Activated CD8-positive, alpha-beta T cell treated with anti-CD3 and anti-CD28 coated beads for 36 hours (primary cell): ENCODE measurements at regions of chr2 and their contacts with region 1.

Region 1: GRCh38 chr2:20635675-20636584 is 15.0 kb downstream of the HS1BP3 start:
- DNase-seq: peak; percentile 71
- ATAC-seq: peak; percentile 98
- H3K4me3 Mint-ChIP-seq: no peak overlapping the region
- H3K27ac Mint-ChIP-seq: no peak overlapping the region
- H3K4me1 Mint-ChIP-seq: peaks cover 2% of the 10 kb centered on the region
- H3K27me3 Mint-ChIP-seq: no peaks in the 10 kb centered on the region
- CTCF ChIP-seq: peak; percentile 70

Region 2: DNA sequence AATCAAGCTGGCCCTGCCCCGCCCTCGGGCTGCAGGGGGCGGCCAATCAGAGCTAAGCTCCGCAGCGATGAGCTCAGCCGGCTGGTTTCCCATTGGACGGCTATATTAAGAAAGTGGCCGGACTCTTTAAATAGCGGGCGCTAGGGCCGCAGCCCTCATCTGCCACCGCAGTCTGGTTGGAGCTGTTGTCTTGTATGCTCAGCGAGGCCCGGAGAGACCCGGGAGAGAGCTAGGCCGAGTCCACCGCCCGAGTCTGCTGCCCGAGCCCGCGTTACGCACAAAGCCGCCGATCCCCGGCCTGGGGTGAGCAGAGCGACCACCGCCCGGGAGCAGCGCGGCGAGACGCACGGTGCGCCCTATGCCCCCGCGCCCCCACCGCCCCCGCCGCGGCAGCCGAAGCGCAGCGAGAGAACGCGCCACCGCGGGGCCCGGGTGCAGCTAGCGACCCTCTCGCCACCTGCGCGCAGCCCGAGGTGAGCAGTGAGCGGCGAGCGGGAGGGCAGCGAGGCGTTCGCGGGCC is 189.0 kb before region 1 on chr2 and contains the start of gene RHOB:
- CTCF ChIA-PET with region 1: interaction called, 117 read pairs
- POLR2A ChIA-PET with region 1: interaction called, 6 read pairs
- intact Hi-C with region 1: no loop called
- DNase-seq: peak; percentile 95
- ATAC-seq: peak; percentile 99
- H3K4me3 Mint-ChIP-seq: peak within 1 kb of the TSS; percentile 80
- H3K27ac Mint-ChIP-seq: peak within 1 kb of the TSS; percentile 64
- H3K4me1 Mint-ChIP-seq: peaks cover 8% of the 10 kb centered on the region
- H3K27me3 Mint-ChIP-seq: peaks cover 4% of the 10 kb centered on the region
- CTCF ChIP-seq: no peak
- total RNA-seq, gene RHOB: 14.2 to 15.4 TPM

Region 3: GRCh38 chr2:20606198-20606597 is 29.7 kb before region 1 on chr2:
- CTCF ChIA-PET with region 1: no interaction called
- POLR2A ChIA-PET with region 1: no interaction called
- intact Hi-C with region 1: no loop called
- DNase-seq: no peak
- ATAC-seq: no peak
- H3K4me3 Mint-ChIP-seq: no peak overlapping the region
- H3K27ac Mint-ChIP-seq: no peak overlapping the region
- H3K4me1 Mint-ChIP-seq: no peaks in the 10 kb centered on the region
- H3K27me3 Mint-ChIP-seq: no peaks in the 10 kb centered on the region
- CTCF ChIP-seq: no peak

Region 4: DNA sequence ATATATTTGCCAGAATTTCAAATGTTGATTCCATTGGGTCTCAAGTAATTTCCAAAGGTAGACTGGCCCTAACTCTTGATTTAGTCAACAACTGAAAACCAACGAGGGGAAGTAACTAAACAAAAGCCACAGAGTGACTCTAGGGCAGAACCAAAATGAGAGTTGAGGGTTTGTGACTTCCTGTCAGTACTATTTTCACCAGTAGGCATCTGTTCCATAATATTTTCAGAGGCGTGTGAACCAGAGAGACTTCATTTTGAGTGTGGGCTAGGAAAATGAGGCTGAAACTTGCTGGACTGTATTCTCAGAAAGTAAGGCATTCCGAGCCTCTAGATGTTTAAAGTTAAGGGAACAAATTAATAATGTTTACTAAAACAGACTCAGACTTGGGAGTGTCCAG is 101.6 kb after region 1 on chr2:
- CTCF ChIA-PET with region 1: no interaction called
- POLR2A ChIA-PET with region 1: no interaction called
- intact Hi-C with region 1: no loop called
- DNase-seq: no peak
- ATAC-seq: no peak
- H3K4me3 Mint-ChIP-seq: no peak overlapping the region
- H3K27ac Mint-ChIP-seq: no peak overlapping the region
- H3K4me1 Mint-ChIP-seq: no peaks in the 10 kb centered on the region
- H3K27me3 Mint-ChIP-seq: no peaks in the 10 kb centered on the region
- CTCF ChIP-seq: no peak

Region 5: DNA sequence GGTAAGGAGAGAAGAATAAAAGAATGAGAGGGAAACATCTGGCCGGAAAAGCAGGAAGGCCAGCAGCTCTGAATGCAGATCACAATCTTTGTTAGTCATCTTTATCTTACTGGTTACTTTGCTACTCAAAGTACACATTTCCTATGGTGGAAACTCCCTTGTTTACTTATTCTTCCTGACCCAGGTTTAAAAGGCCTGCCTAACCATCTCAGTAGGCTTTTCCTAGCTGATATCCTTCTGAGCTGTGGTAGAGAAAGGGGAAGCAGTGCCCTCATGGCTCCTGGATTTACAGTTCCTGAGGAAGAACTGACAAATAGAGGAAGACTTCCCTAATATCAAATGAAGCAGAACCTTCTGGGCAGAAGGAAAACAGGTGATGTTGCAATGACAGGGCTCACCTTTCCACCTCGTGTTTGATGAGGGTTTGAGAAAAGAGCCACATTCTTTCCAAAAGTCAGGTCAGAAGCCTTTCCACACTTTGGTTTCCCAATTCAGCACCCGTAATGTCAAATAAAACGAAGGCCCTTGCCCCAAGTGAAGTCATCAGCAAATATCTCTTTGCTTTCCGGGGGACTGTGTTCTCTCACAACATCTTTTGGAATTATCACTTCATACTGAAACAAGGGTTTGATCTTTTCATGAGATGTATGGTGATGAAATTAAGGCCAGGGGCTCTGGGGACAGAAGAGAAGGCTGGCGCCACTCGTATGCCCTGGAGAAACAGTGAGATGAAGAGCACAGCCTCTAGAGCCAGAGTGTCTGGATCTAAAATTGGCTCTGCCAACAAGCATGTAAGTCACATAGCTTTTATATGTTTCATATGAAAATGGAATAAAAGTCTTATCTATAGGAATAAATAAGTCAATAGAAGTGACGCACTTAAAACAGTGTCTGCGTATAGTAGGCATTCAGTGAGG is 434.7 kb after region 1 on chr2:
- CTCF ChIA-PET with region 1: no interaction called
- POLR2A ChIA-PET with region 1: no interaction called
- intact Hi-C with region 1: no loop called
- DNase-seq: no peak
- ATAC-seq: no peak
- H3K4me3 Mint-ChIP-seq: no peak overlapping the region
- H3K27ac Mint-ChIP-seq: no peak overlapping the region
- H3K4me1 Mint-ChIP-seq: no peaks in the 10 kb centered on the region
- H3K27me3 Mint-ChIP-seq: peaks cover 2% of the 10 kb centered on the region
- CTCF ChIP-seq: no peak